WTC11 (cell line): ENCODE measurements at regions of chr16 and their contacts with region 1.

Region 1: DNA sequence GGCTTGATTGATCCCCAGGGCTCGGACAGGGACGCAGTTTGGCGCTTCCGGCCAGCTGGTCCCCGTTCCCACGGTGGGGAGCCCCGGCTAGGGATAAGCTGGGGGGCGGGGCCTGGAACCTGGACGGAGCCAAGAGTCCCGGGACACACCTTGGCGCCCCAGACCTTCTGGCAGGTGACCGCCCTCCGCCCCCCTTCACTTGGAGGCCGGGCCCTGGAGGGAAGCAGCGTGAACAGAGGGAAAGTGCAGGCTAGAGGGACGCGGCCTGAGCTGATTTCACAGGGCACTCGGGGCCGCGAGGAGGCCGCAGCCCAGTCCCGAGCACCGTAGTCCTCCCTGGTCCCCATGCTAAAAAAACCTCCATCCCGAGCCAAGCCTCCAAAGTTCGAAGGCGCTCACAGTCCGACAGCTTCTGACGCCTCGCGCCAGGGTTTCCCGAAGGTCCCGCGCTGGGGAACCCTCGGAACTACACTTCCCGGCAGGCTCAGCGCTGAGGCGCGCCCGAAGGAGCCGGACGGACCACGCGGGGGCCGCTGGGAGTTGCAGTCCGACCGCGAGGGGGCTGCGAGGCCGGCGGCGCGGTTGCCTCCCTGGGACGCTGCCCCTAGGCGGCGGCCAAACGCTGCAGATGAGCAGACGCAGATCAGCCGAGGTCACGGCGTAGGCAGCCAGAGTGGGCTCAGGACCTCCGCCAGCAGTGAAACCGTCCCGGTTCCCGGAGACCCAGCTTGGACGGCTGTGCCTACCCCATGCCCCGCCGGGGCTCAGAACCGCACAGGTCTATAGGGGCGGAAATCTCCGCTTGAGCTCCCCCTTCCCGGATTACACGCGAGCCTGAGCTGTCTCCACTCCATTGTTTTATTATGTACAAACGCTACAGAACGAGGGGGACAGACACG is at the start of gene TBX6:
- DNase-seq: peak; percentile 97
- ATAC-seq: peak; percentile 69
- H3K4me3 Mint-ChIP-seq: peak within 1 kb of the TSS; percentile 87
- H3K27ac Mint-ChIP-seq: peak within 1 kb of the TSS; percentile 98
- H3K4me1 Mint-ChIP-seq: peaks cover 27% of the 10 kb centered on the region
- H3K27me3 Mint-ChIP-seq: peaks cover 3% of the 10 kb centered on the region
- CTCF ChIP-seq: no peak
- total RNA-seq, gene TBX6: 5.1 to 7.6 TPM (median 6.6 TPM) in 3 replicates

Region 2: DNA sequence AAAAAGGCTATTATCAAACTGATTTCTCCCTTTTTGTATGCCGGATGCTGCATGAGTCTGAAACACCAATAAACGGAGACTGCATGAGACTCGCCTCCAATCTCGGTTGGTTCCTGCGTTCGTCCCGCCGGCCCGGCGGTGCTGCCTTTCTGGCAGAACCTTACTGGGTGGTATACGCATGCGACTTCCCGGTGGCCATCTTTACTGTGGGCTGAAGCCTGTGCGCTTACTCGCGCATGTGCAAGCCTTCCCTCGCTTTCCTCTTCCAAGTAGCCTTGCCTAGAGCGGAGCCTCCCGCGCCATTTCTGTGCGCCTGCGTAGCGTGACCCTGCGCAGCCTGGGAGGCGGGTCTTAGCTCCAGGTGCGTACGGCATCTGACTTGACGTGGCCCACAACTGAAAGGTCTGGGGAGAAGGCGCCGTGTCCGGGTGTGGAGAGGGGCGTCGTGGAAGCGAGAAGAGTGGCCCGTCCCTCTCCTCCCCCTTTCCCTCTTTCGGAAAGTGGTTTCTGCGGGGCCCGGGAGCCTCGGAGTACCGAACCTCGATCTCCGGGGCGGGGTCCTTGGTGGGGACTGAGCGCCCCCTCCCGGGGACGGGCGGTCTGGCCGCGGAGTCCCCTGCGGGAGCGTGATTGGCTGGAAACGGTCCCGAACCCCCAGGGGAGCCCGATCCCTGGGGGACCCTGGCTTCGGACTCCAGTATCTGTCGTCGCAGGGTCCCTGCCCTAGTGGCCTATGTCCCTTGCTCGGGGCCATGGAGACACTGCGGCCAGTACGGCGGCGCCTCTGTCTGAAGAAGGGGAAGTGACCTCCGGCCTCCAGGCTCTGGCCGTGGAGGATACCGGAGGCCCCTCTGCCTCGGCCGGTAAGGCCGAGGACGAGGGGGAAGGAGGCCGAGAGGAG is 275.7 kb before region 1 on chr16 and contains the start of gene PAGR1:
- CTCF ChIA-PET with region 1: interaction called, 3 read pairs
- POLR2A ChIA-PET with region 1: interaction called, 10 read pairs
- DNase-seq: peak; percentile 98
- ATAC-seq: peak; percentile 56
- H3K4me3 Mint-ChIP-seq: peak within 1 kb of the TSS; percentile 94
- H3K27ac Mint-ChIP-seq: peak within 1 kb of the TSS; percentile 100
- H3K4me1 Mint-ChIP-seq: peaks cover 56% of the 10 kb centered on the region
- H3K27me3 Mint-ChIP-seq: no peaks in the 10 kb centered on the region; the same call in 1 of the 2 replicates
- CTCF ChIP-seq: peak; percentile 81
- total RNA-seq, gene PAGR1: 60.1 to 69.0 TPM (median 66.8 TPM) in 3 replicates

Region 3: GRCh38 chr16:30065143-30065850 is 26.4 kb before region 1 on chr16 and contains the start of gene ALDOA:
- CTCF ChIA-PET with region 1: interaction called, 67 read pairs
- POLR2A ChIA-PET with region 1: interaction called, 27 read pairs
- DNase-seq: peak; percentile 92
- ATAC-seq: peak; percentile 86
- H3K4me3 Mint-ChIP-seq: peak within 1 kb of the TSS; percentile 96
- H3K27ac Mint-ChIP-seq: peak within 1 kb of the TSS; percentile 99
- H3K4me1 Mint-ChIP-seq: peaks cover 37% of the 10 kb centered on the region
- H3K27me3 Mint-ChIP-seq: no peaks in the 10 kb centered on the region
- CTCF ChIP-seq: no peak
- total RNA-seq, gene ALDOA: 1,537 to 1,958 TPM (median 1,913 TPM) in 3 replicates

Region 4: DNA sequence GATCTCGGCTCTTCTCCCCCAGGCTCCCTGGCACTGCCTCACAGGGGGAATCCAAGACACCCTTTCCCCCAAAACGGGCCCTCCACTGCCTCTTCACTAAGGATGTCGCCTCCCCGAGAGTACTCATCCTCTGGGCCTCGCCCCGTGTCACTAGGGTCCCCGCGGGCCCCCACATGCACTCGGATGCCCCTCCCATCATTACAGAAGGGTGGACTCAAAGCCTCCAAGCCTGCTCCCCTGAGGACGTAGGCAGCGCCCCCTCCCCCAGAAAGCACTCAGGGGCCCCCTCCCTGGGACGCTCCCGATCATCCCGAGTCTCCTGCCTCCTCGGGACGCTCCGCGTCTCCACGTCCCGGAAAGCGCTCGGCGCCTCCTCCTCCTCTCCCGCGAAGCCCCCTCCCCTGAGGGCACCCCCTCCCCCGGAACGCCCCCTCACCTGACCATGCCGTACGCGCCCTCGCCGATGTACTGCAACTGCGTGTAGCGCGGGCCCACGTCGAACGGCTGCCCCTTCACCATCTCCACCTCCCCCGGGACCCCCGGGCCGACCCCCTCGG is 31.0 kb after region 1 on chr16:
- CTCF ChIA-PET with region 1: interaction called, 10 read pairs
- POLR2A ChIA-PET with region 1: no interaction called
- DNase-seq: peak; percentile 57
- ATAC-seq: peak; percentile 58
- H3K4me3 Mint-ChIP-seq: peak overlapping the region; percentile 81
- H3K27ac Mint-ChIP-seq: no peak overlapping the region
- H3K4me1 Mint-ChIP-seq: peaks cover 5% of the 10 kb centered on the region
- H3K27me3 Mint-ChIP-seq: peaks cover 24% of the 10 kb centered on the region
- CTCF ChIP-seq: no peak

Region 5: DNA sequence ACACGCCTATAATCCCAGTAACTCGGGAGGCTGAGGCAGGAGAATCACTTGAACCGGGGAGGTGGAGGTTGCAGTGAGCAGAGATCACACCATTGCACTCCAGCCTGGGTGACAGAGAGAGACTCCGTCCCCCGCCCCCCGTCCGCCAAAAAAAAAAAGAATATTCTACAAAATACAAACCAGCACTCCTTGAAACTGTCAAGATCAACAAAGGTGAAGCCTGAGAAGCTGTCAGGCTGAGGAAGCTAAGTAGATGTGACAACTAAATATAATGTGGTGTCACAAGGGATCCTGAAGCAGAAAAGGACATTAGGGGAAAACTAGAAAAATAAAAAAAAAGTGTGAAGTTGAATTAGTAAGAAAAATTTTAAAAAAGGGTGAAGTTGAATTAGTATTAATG is 257.2 kb after region 1 on chr16:
- CTCF ChIA-PET with region 1: no interaction called
- POLR2A ChIA-PET with region 1: no interaction called
- DNase-seq: no peak
- ATAC-seq: no peak
- H3K4me3 Mint-ChIP-seq: no peak overlapping the region
- H3K27ac Mint-ChIP-seq: no peak overlapping the region
- H3K4me1 Mint-ChIP-seq: no peaks in the 10 kb centered on the region
- H3K27me3 Mint-ChIP-seq: no peaks in the 10 kb centered on the region
- CTCF ChIP-seq: no peak

Region 6: DNA sequence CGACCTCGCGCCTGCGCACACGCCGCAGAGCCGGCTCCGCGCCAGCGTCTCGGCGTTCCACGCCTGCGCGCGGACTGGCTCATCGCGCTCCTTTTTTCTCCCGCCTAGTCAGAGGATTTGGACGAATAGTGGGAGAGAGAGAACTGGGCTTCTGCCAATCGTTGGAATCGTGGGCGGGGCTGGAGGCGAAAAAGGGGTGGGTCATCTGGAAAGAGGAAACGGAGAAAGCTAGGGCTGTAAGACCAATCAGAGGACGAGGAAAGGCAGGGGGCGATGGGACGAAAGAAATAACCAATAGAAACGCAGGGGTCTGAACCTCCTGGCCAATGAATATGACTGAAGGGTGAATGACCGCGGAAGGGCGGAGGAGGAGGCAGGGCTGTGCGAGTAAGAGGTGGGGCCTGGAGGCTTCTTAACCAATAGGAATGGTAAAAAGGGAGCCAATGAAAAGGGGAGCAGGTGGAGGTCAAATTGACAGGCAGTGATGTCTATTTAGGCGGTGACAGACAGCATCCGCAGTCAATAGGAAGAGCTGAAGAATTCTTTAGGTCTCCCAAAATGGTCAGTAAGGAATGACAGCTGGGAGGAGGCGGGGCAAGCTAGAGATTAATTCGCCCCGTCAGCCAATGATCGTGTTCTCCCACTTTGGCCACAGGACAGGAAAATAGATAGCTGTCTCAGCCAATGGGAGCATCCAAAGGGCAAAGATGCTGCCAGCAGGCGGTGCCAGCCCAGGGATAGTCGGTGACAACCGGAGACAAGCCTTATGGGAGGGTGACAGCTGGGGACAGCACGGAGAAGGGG is 278.9 kb after region 1 on chr16 and contains the start of gene TBC1D10B:
- CTCF ChIA-PET with region 1: interaction called, 16 read pairs
- POLR2A ChIA-PET with region 1: no interaction called
- DNase-seq: peak; percentile 99
- ATAC-seq: peak; percentile 91
- H3K4me3 Mint-ChIP-seq: peak within 1 kb of the TSS; percentile 80
- H3K27ac Mint-ChIP-seq: peak within 1 kb of the TSS; percentile 57
- H3K4me1 Mint-ChIP-seq: peaks cover 37% of the 10 kb centered on the region
- H3K27me3 Mint-ChIP-seq: no peaks in the 10 kb centered on the region; the same call in 1 of the 2 replicates
- CTCF ChIP-seq: no peak
- total RNA-seq, gene TBC1D10B: 33.4 to 40.5 TPM (median 34.6 TPM) in 3 replicates

Region 7: GRCh38 chr16:30407102-30407803 is 315.5 kb after region 1 on chr16 and contains the start of gene ZNF771:
- CTCF ChIA-PET with region 1: interaction called, 14 read pairs
- POLR2A ChIA-PET with region 1: no interaction called
- DNase-seq: peak; percentile 96
- ATAC-seq: peak; percentile 84
- H3K4me3 Mint-ChIP-seq: peak within 1 kb of the TSS; percentile 90
- H3K27ac Mint-ChIP-seq: peak within 1 kb of the TSS; percentile 93
- H3K4me1 Mint-ChIP-seq: peaks cover 20% of the 10 kb centered on the region
- H3K27me3 Mint-ChIP-seq: peaks cover 21% of the 10 kb centered on the region
- CTCF ChIP-seq: no peak
- total RNA-seq, gene ZNF771: 10.0 to 12.5 TPM (median 11.3 TPM) in 3 replicates